ENCODE measurements at regions of chr5 and their contacts with region 1.

Region 1: DNA sequence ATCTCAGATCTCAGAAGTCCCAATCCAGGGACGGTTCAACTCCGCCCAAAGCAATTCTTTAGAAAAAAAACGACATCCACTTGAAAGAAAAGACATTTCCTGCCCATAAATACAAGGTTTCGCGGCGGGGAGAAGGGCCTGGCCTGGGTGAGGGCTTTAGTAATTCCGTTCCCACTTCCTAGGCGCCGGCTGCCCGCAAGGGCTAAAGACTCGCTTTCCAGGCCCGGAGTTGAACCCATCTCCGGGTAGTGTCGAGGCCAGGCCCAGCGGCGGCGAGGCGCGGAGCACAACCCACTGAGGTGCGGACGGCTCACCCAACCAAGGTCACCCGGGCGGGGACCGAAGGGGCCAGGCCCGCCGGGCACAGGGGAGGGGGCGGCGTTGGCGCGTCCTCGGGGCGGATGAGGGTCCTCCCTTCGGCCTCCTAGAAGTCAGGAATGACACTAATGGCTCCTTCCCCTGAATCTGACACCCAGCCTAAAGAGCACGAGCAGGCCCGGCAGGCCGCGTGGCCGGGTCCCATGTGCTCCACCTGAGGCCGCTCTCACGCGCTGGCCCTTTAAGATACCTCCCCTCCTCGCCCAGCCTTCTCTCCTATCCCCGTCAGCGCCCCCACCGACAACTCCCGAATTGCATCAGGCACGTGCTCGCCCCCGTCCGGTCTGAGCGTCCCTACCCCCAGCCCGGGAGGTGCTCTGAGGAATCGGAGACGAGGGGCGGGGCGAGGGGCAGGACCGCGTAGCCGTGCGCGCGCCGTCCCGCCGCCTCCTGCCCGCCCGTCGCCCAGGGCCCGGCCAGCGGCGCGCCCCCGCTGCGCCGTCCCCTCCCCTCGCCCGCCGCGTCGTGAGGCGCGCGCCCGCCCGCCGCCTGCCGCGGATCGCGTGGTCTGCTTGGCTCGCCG is 467 bp upstream of the LARP1 start:
- DNase-seq: peak; percentile 100
- H3K4me3 Mint-ChIP-seq: peak overlapping the region; percentile 80
- H3K27ac Mint-ChIP-seq: peak overlapping the region; percentile 97
- H3K4me1 Mint-ChIP-seq: peaks cover 40% of the 10 kb centered on the region
- H3K27me3 Mint-ChIP-seq: no peaks in the 10 kb centered on the region
- CTCF ChIP-seq: peak; percentile 59

Region 2: GRCh38 chr5:154647114-154647760 is 107.5 kb before region 1 on chr5:
- CTCF ChIA-PET with region 1: interaction called, 6 read pairs
- intact Hi-C with region 1: loop called (anchors 1 kb)
- DNase-seq: peak; percentile 55
- H3K4me3 Mint-ChIP-seq: peak overlapping the region; percentile 77
- H3K27ac Mint-ChIP-seq: peak overlapping the region; percentile 49
- H3K4me1 Mint-ChIP-seq: peaks cover 17% of the 10 kb centered on the region
- H3K27me3 Mint-ChIP-seq: peaks cover 19% of the 10 kb centered on the region
- CTCF ChIP-seq: no peak

Region 3: GRCh38 chr5:154683101-154683880 is 71.4 kb before region 1 on chr5:
- CTCF ChIA-PET with region 1: interaction called, 6 read pairs
- intact Hi-C with region 1: loop called (anchors 1 kb)
- DNase-seq: no peak
- H3K4me3 Mint-ChIP-seq: peak overlapping the region; percentile 69
- H3K27ac Mint-ChIP-seq: peak overlapping the region; percentile 91
- H3K4me1 Mint-ChIP-seq: peaks cover 27% of the 10 kb centered on the region
- H3K27me3 Mint-ChIP-seq: no peaks in the 10 kb centered on the region
- CTCF ChIP-seq: no peak

Region 4: DNA sequence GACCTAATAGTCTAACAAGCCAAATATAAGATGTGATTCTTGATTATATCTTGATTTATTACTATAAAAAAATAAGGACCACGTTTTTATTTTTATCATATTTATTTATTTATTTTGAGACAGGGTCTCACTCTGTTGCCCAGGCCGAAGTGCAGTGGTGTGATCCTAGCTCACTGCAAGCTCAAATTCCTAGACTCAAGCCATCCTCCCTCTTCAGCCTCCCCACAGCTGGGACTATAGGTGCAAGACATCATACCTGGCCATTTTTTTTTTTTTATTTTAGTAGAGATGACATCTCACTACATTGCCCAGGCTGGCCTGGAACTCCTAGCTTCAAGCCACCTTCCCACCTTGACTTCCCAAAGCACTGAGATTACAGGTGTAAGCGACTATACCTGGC is 60.6 kb before region 1 on chr5:
- CTCF ChIA-PET with region 1: no interaction called
- intact Hi-C with region 1: no loop called
- DNase-seq: no peak
- H3K4me3 Mint-ChIP-seq: no peak overlapping the region
- H3K27ac Mint-ChIP-seq: no peak overlapping the region
- H3K4me1 Mint-ChIP-seq: peaks cover 11% of the 10 kb centered on the region
- H3K27me3 Mint-ChIP-seq: no peaks in the 10 kb centered on the region
- CTCF ChIP-seq: no peak

Region 5: GRCh38 chr5:154714266-154714986 is 40.3 kb before region 1 on chr5:
- CTCF ChIA-PET with region 1: interaction called, 4 read pairs
- intact Hi-C with region 1: loop called (anchors 1 kb)
- DNase-seq: peak; percentile 34
- H3K4me3 Mint-ChIP-seq: peak overlapping the region; percentile 52
- H3K27ac Mint-ChIP-seq: peak overlapping the region; percentile 67
- H3K4me1 Mint-ChIP-seq: peaks cover 37% of the 10 kb centered on the region
- H3K27me3 Mint-ChIP-seq: no peaks in the 10 kb centered on the region
- CTCF ChIP-seq: no peak

Region 6: DNA sequence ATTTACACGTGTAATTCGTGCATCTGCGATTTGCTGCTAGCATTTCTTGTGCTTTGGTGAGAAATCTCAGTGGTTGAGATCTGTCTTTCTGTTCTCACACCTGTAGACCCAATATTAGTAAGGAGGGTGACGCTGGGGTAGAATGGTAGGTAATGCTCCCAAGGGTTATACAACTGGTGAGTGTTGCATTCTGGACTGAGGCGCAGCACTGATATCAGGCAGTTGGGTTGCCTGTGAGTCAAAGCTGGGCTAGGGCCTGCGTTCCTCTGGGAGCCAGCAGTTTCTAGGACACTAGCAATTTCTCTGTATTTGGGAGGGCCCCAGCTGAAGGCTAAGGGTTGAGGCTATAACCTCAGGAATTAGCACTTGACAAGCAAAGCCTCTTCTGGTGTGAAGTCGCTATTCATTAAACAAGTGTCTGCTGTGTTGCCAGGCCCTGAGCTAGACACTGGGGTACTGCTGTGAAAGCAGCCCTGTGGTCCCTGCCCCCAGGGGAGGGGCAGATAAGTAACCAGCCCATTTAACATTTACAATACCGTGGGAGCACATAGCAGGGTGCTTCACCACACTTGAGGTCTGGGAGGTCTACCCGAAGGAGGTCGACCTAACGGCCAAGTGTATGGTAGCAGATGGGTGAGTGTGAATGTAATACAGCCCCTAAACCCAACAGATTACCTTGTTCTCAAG is 29.2 kb after region 1 on chr5:
- CTCF ChIA-PET with region 1: interaction called, 4 read pairs
- intact Hi-C with region 1: loop called (anchors 2 kb)
- DNase-seq: no peak
- H3K4me3 Mint-ChIP-seq: no peak overlapping the region
- H3K27ac Mint-ChIP-seq: no peak overlapping the region
- H3K4me1 Mint-ChIP-seq: peaks cover 35% of the 10 kb centered on the region
- H3K27me3 Mint-ChIP-seq: no peaks in the 10 kb centered on the region
- CTCF ChIP-seq: no peak

Region 7: DNA sequence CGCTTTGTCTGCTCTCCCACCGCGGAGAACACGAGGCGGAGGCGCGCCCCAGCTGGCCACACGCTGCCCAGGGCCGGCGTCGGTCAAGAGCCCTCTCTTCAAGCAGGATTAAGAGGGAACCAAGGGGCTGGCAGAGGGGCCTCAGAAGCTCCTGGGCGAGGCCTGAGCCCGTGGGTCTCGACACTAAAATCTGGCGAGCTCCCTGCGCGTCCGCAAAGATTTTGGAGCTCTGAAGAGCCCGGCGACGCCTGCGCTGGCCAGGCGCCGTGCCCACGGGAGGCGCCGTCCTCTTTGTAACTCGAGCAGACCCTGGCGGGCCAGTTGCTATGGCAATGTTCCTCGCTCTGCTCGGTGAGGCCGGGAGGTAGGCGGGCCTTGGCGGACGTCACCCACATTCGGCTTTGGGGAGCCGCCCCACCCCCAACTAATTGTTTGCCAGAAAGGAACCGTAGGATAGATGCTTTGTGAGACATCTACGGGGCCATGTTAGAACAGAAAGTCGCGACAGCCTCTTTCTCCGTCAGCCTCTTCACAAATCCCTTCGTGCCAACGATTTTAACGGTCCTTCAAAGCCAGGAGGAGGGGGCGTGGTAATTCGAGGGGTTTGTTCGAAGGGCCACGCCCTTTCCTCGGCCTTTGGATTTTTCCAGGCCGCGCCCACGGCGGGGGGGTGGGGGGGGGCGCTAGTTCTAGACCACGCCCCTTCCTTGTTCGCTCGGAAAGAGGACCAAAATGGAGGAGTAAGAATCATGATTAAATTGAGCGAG is 103.0 kb after region 1 on chr5:
- CTCF ChIA-PET with region 1: no interaction called
- intact Hi-C with region 1: loop called (anchors 2 kb)
- DNase-seq: peak; percentile 97
- H3K4me3 Mint-ChIP-seq: peak overlapping the region; percentile 100
- H3K27ac Mint-ChIP-seq: peak overlapping the region; percentile 95
- H3K4me1 Mint-ChIP-seq: peaks cover 23% of the 10 kb centered on the region
- H3K27me3 Mint-ChIP-seq: no peaks in the 10 kb centered on the region
- CTCF ChIP-seq: no peak